AG04450 (cell line): ENCODE measurements at regions of chr1 and their contacts with region 1.

Region 1: DNA sequence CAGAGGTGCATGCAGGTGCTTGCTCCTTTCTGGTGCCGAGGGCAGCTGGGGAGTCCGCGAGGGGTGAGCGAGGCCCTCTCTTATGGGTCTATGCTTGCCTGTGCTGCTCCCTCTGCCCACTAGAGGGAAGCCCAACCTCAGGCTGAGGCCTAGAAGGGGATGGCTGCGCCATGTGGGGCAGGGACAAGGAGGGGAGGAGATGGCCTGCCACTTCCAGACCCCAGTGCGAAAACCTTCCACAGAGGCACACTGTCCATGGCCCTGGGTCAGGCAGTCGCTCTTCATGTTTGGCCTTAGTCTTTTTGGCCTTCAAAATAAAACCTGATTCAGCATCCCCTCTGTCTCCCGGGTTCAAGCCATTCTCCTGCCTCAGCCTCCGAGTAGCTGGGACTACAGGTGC is 14.0 kb downstream of the RHBG start:
- DNase-seq: no peak
- H3K4me3 ChIP-seq: no peak overlapping the region
- H3K27ac ChIP-seq: no peak overlapping the region
- H3K27me3 ChIP-seq: peaks cover 30% of the 10 kb centered on the region
- CTCF ChIP-seq: peak; percentile 91

Region 2: DNA sequence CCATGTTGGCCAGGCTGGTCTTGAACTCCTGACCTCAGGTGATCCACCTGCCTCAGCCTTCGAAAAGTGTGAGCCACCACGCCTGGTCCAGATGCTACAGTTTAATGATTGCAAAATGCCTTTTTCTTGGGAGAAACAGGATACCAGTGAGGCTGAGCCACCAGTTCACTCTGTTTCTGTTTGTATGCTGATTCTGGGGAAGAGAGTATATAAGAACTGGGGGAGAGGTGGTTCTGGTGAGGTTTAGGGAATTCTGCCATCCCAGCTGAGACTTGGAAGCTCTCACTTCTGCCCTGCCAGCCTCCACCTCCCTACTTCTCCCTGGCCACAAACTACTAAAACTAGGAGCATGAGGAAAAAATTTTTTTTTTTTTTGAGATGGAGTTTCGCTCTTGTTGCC is 178.3 kb before region 1 on chr1:
- CTCF ChIA-PET with region 1: no interaction called
- POLR2A ChIA-PET with region 1: no interaction called
- DNase-seq: no peak
- H3K4me3 ChIP-seq: no peak overlapping the region
- H3K27ac ChIP-seq: no peak overlapping the region
- H3K27me3 ChIP-seq: no peaks in the 10 kb centered on the region
- CTCF ChIP-seq: no peak

Region 3: DNA sequence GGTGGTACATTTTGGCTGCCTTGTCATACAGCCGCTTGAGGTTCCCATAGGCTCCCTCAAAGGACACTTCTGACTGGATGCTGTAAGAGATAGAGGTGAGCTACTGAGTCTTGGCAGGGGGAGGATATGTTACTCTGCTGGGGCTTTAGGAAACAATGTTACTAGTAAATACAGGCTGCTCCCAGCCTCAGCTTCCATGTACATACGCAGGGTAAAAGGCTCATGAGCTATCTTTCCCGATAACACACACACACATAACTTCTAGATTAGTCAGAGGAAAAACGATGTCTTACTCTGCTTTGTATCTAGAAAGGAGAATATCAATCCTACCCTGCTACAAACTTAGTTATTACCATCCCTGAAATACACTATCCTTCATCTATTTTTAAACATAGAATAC is 114.7 kb before region 1 on chr1:
- CTCF ChIA-PET with region 1: no interaction called
- POLR2A ChIA-PET with region 1: no interaction called
- DNase-seq: no peak
- H3K4me3 ChIP-seq: no peak overlapping the region
- H3K27ac ChIP-seq: no peak overlapping the region
- H3K27me3 ChIP-seq: no peaks in the 10 kb centered on the region
- CTCF ChIP-seq: no peak

Region 4: DNA sequence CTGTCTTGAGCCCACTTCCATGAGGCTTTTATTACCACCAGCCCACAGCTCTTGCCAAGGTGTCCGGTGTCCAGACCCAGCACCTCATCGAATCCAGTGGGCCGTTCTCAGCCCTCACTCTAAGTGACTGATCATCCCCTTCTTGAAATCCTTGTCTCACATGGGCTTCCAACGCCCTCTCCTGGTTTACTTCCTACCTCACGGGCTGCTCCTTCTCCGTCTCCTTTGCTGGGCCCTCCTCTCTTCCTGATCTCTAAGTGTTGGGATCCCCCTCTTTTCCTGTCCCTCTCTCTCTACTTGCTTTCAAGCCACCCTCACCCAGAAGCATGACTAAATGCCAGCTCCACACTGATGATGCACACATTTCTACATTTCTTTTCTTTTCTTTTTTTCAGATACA is 23.1 kb before region 1 on chr1:
- CTCF ChIA-PET with region 1: interaction called, 14 read pairs
- POLR2A ChIA-PET with region 1: no interaction called
- DNase-seq: no peak
- H3K4me3 ChIP-seq: no peak overlapping the region
- H3K27ac ChIP-seq: no peak overlapping the region
- H3K27me3 ChIP-seq: peaks cover 46% of the 10 kb centered on the region
- CTCF ChIP-seq: peak; percentile 59

Region 5: GRCh38 chr1:156401681-156402081 is 18.7 kb after region 1 on chr1:
- CTCF ChIA-PET with region 1: interaction called, 15 read pairs
- POLR2A ChIA-PET with region 1: no interaction called
- DNase-seq: no peak
- H3K4me3 ChIP-seq: no peak overlapping the region
- H3K27ac ChIP-seq: no peak overlapping the region
- H3K27me3 ChIP-seq: peaks cover 62% of the 10 kb centered on the region
- CTCF ChIP-seq: no peak

Region 6: GRCh38 chr1:156429313-156430060 is 46.5 kb after region 1 on chr1:
- CTCF ChIA-PET with region 1: interaction called, 15 read pairs
- POLR2A ChIA-PET with region 1: no interaction called
- DNase-seq: no peak
- H3K4me3 ChIP-seq: no peak overlapping the region
- H3K27ac ChIP-seq: no peak overlapping the region
- H3K27me3 ChIP-seq: peaks cover 96% of the 10 kb centered on the region
- CTCF ChIP-seq: no peak

Region 7: GRCh38 chr1:156456622-156457465 is 73.8 kb after region 1 on chr1:
- CTCF ChIA-PET with region 1: interaction called, 22 read pairs
- POLR2A ChIA-PET with region 1: no interaction called
- DNase-seq: peak; percentile 95
- H3K4me3 ChIP-seq: peak overlapping the region; percentile 60
- H3K27ac ChIP-seq: peak overlapping the region; percentile 92
- H3K27me3 ChIP-seq: peaks cover 4% of the 10 kb centered on the region
- CTCF ChIP-seq: no peak

Region 8: GRCh38 chr1:156608036-156608674 is 225.1 kb after region 1 on chr1:
- CTCF ChIA-PET with region 1: interaction called, 28 read pairs
- POLR2A ChIA-PET with region 1: no interaction called
- DNase-seq: peak; percentile 39
- H3K4me3 ChIP-seq: no peak overlapping the region
- H3K27ac ChIP-seq: no peak overlapping the region
- H3K27me3 ChIP-seq: peaks cover 18% of the 10 kb centered on the region
- CTCF ChIP-seq: peak; percentile 91

Region 9: DNA sequence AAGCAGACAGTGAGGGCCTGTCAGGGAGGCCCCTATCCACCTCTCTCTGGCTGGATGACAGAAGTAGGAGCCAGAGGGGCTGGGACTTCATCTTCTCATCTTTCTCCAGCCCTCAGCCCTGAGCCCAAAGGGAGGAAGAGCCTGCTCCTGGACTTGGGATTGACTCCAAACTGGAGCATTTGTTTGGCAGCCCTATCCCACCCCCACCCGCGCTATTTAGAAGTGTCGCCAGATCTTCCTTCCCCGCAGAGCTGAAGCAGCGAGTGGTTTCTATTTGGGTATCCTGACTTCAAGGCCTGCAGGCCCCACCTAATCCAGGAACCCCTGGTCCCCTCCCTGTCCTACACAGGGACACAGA is 284.6 kb after region 1 on chr1:
- CTCF ChIA-PET with region 1: no interaction called
- POLR2A ChIA-PET with region 1: no interaction called
- DNase-seq: no peak
- H3K4me3 ChIP-seq: no peak overlapping the region
- H3K27ac ChIP-seq: peak overlapping the region; percentile 57
- H3K27me3 ChIP-seq: no peaks in the 10 kb centered on the region
- CTCF ChIP-seq: no peak

Region 10: GRCh38 chr1:156927215-156928042 is 544.4 kb after region 1 on chr1:
- CTCF ChIA-PET with region 1: interaction called, 11 read pairs
- POLR2A ChIA-PET with region 1: no interaction called
- DNase-seq: peak; percentile 26
- H3K4me3 ChIP-seq: peak overlapping the region; percentile 50
- H3K27ac ChIP-seq: no peak overlapping the region
- H3K27me3 ChIP-seq: peaks cover 47% of the 10 kb centered on the region
- CTCF ChIP-seq: peak; percentile 81